ENCODE measurements at regions of chr9 and their contacts with region 1.

Region 1: DNA sequence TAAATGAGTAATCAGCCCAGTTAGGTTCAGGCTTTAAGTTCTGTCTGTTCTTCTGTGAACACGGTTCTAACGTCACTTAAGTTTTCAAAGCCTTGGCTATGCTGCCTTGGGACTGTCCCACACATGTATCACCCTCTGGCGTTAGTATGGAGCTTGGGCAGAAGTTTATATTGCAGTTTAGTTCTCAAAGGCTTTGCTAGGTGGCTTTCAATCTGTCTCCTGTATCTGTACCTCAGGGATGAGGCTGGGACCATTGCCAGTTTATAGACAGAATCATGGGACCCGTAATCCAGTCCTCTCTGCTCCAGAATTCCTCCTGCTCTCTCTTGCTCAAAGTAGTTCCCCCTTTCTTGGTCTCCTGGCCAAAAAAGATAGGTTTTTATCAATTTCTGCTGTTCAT is 12.1 kb downstream of the C9orf40 start:
- DNase-seq: no peak
- H3K4me3 ChIP-seq: no peak overlapping the region
- H3K27ac ChIP-seq: no peak overlapping the region
- H3K4me1 ChIP-seq: no peaks in the 10 kb centered on the region
- H3K27me3 ChIP-seq: no peaks in the 10 kb centered on the region
- CTCF ChIP-seq: no peak
- POLR2A ChIP-seq: no peak

Region 2: DNA sequence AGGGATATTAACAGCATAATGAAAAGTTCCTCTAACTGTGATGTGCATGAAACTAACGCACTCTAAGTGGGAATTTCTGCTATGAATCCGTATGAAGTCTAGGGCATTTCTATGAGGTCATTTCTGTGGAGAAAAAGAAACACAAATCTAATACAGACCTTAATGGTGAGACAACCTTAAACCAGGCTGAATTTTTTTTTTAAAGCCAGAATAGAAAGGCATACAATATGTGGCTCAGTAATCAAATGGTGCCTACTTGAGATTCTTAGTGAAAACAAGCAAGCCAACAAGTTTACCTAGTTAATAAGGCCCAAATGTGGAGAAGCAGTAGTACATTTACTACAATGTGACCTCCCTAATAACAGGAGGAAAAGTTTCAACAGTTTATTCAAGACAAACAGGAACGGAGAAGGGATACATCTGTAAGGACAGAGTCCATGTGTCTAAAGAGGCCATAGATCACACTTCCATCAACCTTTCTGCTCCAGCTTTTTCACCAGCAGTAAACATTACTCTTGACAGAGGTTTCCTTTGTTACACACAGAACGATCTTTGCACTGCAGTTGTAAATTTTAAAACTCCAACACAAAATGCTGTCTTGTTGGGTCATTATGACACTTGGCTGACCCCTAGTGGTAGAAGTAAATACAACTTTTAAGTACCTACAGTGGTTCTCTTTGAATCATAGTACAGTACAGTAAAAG is 61.3 kb after region 1 on chr9:
- intact Hi-C with region 1: loop called (anchors 10 kb)
- DNase-seq: no peak
- H3K4me3 ChIP-seq: no peak overlapping the region
- H3K27ac ChIP-seq: no peak overlapping the region
- H3K4me1 ChIP-seq: peaks cover 0 to 12% (median 1%) of the 10 kb centered on the region in 6 donors
- H3K27me3 ChIP-seq: no peaks in the 10 kb centered on the region
- CTCF ChIP-seq: peak; percentile 40 to 78 (median 71)
- POLR2A ChIP-seq: no peak

Measured in spleen (tissue), 13 donors.